Right ventricle myocardium inferior (tissue), 1 donor: ENCODE measurements at regions of chr12 and their contacts with region 1.

Region 1: GRCh38 chr12:111405149-111405860 is 418 bp upstream of the SH2B3 start:
- DNase-seq: peak; percentile 97
- ATAC-seq: peak; percentile 89

Region 2: GRCh38 chr12:111368788-111369495 is 36.4 kb before region 1 on chr12 and contains the start of gene PHETA1:
- intact Hi-C with region 1: loop called (anchors 5 kb)
- DNase-seq: peak; percentile 97
- ATAC-seq: peak; percentile 96
- total RNA-seq, gene PHETA1: 37.4 TPM

Region 3: DNA sequence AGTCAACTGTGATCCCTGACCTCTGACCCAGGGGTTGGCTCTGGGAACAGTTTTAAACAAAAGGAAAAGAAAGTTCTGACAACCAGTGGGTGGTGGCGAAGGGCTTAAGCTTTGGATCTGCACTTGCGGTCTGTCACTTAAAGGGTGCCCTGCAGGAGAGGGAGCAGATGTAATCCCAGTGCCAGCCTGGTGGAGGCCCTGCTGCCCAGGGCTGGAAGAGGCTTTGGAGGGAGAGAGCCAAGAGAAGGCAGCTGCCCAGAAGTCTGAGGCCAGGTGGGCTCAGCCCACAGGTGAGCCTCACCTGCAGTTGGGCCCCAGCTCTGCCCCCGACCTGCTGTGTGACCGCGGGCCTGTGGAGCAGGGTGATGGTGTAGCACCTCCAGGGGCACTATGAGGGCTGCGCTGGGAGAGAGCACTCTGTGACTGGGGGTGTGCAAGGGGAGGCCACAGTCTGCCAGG is 19.5 kb after region 1 on chr12:
- intact Hi-C with region 1: loop called (anchors 2 kb)
- DNase-seq: no peak
- ATAC-seq: peak; percentile 36

Region 4: GRCh38 chr12:111599459-111600204 is 194.3 kb after region 1 on chr12:
- intact Hi-C with region 1: loop called (anchors 5 kb)
- DNase-seq: peak; percentile 94
- ATAC-seq: peak; percentile 92